ENCODE measurements at regions of chr11 and their contacts with region 1.

Region 1: DNA sequence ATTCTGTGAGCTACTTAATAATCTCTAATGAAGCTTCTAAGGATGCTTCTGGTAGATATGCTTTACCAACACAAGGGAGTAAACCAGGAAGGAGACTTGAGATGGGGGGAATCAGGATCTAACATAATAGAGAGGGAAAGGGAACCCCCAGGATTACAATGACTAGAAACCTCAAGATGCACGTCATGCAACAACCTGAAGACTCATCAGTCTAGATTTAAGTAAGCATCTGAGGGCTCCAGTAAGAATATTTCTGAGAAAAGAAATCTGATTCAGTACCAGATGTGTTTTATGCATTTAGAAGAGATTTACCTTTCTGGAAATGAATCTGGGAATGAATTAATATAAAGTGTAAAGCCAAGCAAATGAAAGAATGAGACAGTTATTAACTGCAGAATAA is 15.2 kb downstream of the KDM4D start:
- DNase-seq: no peak
- ATAC-seq: no peak

Region 2: GRCh38 chr11:95035316-95035715 is 46.6 kb after region 1 on chr11:
- intact Hi-C with region 1: loop called in 1 of 2 experiments (anchors 10 kb)
- DNase-seq: no peak
- ATAC-seq: no peak

Region 3: GRCh38 chr11:95076416-95076815 is 87.7 kb after region 1 on chr11:
- intact Hi-C with region 1: no loop called
- DNase-seq: no peak
- ATAC-seq: peak; percentile 65

Region 4: GRCh38 chr11:95182397-95182796 is 193.6 kb after region 1 on chr11:
- intact Hi-C with region 1: no loop called
- DNase-seq: no peak
- ATAC-seq: no peak

Region 5: DNA sequence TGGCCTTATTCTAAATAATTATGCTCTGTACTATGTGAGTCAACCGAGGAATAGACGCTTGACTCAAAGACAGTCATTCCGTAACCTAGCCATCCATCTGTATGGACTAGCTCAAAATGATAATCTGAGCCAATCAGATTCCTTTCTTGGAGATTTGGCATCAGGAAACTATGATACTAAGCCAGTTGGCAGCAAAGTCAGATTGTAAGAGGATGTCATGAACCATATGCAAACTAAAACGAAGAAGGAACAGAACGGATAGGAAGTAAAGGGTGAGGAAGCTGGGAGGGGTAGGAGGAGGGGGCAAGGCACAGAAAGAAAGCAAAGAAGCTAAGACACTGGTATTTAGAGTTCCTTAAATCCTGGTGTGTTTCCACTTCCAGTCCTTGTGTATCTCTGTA is 252.9 kb after region 1 on chr11:
- intact Hi-C with region 1: no loop called
- DNase-seq: no peak
- ATAC-seq: peak; percentile 40